ENCODE measurements at regions of chr12 and their contacts with region 1.

Region 1: GRCh38 chr12:93019975-93020630 is 91.0 kb upstream of the EEA1 start:
- DNase-seq: peak; percentile 92 to 96
- H3K4me3 ChIP-seq: no peak overlapping the region
- H3K4me3 Mint-ChIP-seq: peak overlapping the region; percentile 13
- H3K27ac Mint-ChIP-seq: peak overlapping the region; percentile 89
- H3K4me1 ChIP-seq: peaks cover 89% of the 10 kb centered on the region
- H3K4me1 Mint-ChIP-seq: peaks cover 63% of the 10 kb centered on the region
- H3K27me3 ChIP-seq: no peaks in the 10 kb centered on the region
- H3K27me3 Mint-ChIP-seq: no peaks in the 10 kb centered on the region
- CTCF ChIP-seq: no peak

Region 2: GRCh38 chr12:92810370-92810769 is 209.7 kb before region 1 on chr12:
- CTCF ChIA-PET with region 1: no interaction called
- POLR2A ChIA-PET with region 1: no interaction called
- intact Hi-C with region 1: no loop called
- DNase-seq: no peak
- H3K4me3 ChIP-seq: no peak overlapping the region
- H3K4me3 Mint-ChIP-seq: no peak overlapping the region
- H3K27ac Mint-ChIP-seq: no peak overlapping the region
- H3K4me1 ChIP-seq: no peaks in the 10 kb centered on the region
- H3K4me1 Mint-ChIP-seq: no peaks in the 10 kb centered on the region
- H3K27me3 ChIP-seq: no peaks in the 10 kb centered on the region
- H3K27me3 Mint-ChIP-seq: no peaks in the 10 kb centered on the region
- CTCF ChIP-seq: no peak

Region 3: GRCh38 chr12:92995258-92995903 is 24.7 kb before region 1 on chr12:
- CTCF ChIA-PET with region 1: no interaction called
- POLR2A ChIA-PET with region 1: no interaction called
- intact Hi-C with region 1: no loop called
- DNase-seq: no peak
- H3K4me3 ChIP-seq: no peak overlapping the region
- H3K4me3 Mint-ChIP-seq: no peak overlapping the region
- H3K27ac Mint-ChIP-seq: no peak overlapping the region
- H3K4me1 ChIP-seq: peaks cover 19% of the 10 kb centered on the region
- H3K4me1 Mint-ChIP-seq: peaks cover 28% of the 10 kb centered on the region
- H3K27me3 ChIP-seq: no peaks in the 10 kb centered on the region
- H3K27me3 Mint-ChIP-seq: no peaks in the 10 kb centered on the region
- CTCF ChIP-seq: no peak

Region 4: GRCh38 chr12:93008044-93008778 is 11.9 kb before region 1 on chr12:
- CTCF ChIA-PET with region 1: interaction called, 8 read pairs
- POLR2A ChIA-PET with region 1: interaction called, 3 read pairs
- intact Hi-C with region 1: loop called (anchors 1 kb)
- DNase-seq: no peak
- H3K4me3 ChIP-seq: peak overlapping the region; percentile 41
- H3K4me3 Mint-ChIP-seq: peak overlapping the region; percentile 90
- H3K27ac Mint-ChIP-seq: peak overlapping the region; percentile 94
- H3K4me1 ChIP-seq: peaks cover 72% of the 10 kb centered on the region
- H3K4me1 Mint-ChIP-seq: peaks cover 43% of the 10 kb centered on the region
- H3K27me3 ChIP-seq: no peaks in the 10 kb centered on the region
- H3K27me3 Mint-ChIP-seq: no peaks in the 10 kb centered on the region
- CTCF ChIP-seq: no peak

Region 5: GRCh38 chr12:93080994-93081797 is 61.1 kb after region 1 on chr12:
- CTCF ChIA-PET with region 1: no interaction called
- POLR2A ChIA-PET with region 1: interaction called, 18 read pairs
- intact Hi-C with region 1: loop called (anchors 1 kb)
- DNase-seq: peak; percentile 74 to 86
- H3K4me3 ChIP-seq: no peak overlapping the region
- H3K4me3 Mint-ChIP-seq: peak overlapping the region; percentile 50
- H3K27ac Mint-ChIP-seq: peak overlapping the region; percentile 92
- H3K4me1 ChIP-seq: peaks cover 51% of the 10 kb centered on the region
- H3K4me1 Mint-ChIP-seq: peaks cover 36% of the 10 kb centered on the region
- H3K27me3 ChIP-seq: no peaks in the 10 kb centered on the region
- H3K27me3 Mint-ChIP-seq: no peaks in the 10 kb centered on the region
- CTCF ChIP-seq: no peak

Region 6: GRCh38 chr12:93093243-93093642 is 73.1 kb after region 1 on chr12:
- CTCF ChIA-PET with region 1: no interaction called
- POLR2A ChIA-PET with region 1: no interaction called
- intact Hi-C with region 1: no loop called
- DNase-seq: no peak
- H3K4me3 ChIP-seq: no peak overlapping the region
- H3K4me3 Mint-ChIP-seq: no peak overlapping the region
- H3K27ac Mint-ChIP-seq: no peak overlapping the region
- H3K4me1 ChIP-seq: peaks cover 66% of the 10 kb centered on the region
- H3K4me1 Mint-ChIP-seq: peaks cover 53% of the 10 kb centered on the region
- H3K27me3 ChIP-seq: no peaks in the 10 kb centered on the region
- H3K27me3 Mint-ChIP-seq: no peaks in the 10 kb centered on the region
- CTCF ChIP-seq: no peak

Region 7: DNA sequence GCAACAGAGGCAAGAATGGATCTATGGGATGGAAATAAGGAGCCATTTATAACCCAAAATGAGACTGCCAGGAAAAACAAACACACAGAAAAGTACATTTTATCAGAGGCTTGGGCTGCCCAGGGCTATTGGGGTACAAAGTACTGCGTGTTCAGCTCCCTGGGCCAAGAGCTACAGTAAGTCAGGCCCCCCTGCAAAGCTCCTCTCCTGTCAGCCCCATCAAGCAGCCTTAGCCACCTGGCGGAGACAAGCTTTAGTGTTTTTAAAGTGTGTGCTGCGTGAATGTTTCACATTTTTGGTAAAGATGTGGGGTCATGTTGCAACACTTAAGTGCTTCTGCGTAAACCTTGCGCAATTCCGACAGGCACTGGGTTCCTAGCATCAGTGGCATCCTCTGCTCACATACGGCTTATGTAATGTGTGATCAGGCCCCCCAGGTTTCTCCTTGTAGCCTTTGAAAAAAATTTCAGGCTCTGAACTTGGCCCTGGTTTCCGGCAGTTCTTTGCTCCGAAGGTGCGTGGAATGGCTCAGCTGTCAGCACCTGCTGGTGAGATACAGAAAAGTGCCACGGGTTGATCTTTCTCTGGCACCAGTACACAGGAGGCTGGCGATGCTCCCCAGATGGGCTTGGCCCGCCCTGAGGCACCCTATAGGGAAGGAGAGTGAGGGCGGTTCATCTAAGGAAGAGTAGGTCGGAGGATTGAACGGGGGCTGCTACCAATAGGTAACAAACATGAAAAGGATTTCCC is 107.7 kb after region 1 on chr12:
- CTCF ChIA-PET with region 1: interaction called, 7 read pairs
- POLR2A ChIA-PET with region 1: interaction called, 10 read pairs
- intact Hi-C with region 1: loop called (anchors 1 kb)
- DNase-seq: peak; percentile 89 to 93
- H3K4me3 ChIP-seq: no peak overlapping the region
- H3K4me3 Mint-ChIP-seq: peak overlapping the region; percentile 37
- H3K27ac Mint-ChIP-seq: peak overlapping the region; percentile 94
- H3K4me1 ChIP-seq: peaks cover 36% of the 10 kb centered on the region
- H3K4me1 Mint-ChIP-seq: peaks cover 43% of the 10 kb centered on the region
- H3K27me3 ChIP-seq: no peaks in the 10 kb centered on the region
- H3K27me3 Mint-ChIP-seq: no peaks in the 10 kb centered on the region
- CTCF ChIP-seq: peak; percentile 57 to 65

Region 8: DNA sequence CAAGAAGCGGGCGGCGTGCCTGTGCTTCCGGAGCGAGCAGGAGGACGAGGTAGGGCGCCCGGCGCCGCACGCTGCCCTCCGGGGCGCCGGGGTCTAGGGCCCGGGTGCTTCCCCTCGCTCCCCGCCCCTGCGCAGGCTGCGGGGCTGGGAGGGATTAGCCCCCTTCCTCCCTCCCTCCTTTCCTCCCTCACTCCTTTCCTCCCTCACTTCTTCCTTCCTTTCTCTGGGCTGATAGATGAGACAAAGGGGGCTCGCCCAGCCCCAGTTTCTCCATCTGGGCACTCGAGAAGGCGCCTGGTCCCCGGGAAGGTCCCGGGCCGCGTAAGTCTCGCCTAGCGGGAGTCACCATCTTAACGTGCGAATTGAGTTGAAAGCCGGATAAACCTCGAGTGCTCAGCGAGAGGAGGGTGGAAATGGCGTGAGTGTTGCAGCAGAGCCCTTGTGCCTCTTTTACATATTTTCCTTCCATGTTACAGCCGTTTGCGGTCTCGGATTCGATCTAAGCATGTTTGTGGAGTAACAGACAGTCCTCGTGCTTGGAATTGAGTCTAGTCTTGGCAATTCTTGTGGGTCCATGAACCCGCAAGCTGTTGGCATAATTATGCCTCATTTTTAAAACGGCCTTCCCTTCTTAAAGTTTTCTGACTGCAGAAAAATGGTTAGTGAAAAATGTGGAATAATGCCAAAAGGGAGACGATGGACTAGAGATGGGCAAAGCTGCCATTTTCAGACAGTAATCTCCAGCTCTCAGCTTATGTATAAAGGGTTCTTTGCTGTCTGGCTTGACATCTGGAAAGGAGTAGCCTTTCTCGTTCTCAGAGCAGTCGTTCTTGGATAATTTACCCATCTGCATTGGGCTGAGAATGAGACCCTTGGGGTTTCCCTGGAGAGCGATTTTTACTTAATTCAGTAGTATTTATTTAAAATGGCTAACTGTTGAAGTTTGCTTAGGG is 358.5 kb after region 1 on chr12:
- CTCF ChIA-PET with region 1: interaction called, 4 read pairs
- POLR2A ChIA-PET with region 1: interaction called, 3 read pairs
- intact Hi-C with region 1: loop called (anchors 1 kb)
- DNase-seq: peak in 1 of 2 experiments; percentile 26
- H3K4me3 ChIP-seq: peak overlapping the region; percentile 83
- H3K4me3 Mint-ChIP-seq: peak overlapping the region; percentile 80
- H3K27ac Mint-ChIP-seq: peak overlapping the region; percentile 90
- H3K4me1 ChIP-seq: peaks cover 36% of the 10 kb centered on the region
- H3K4me1 Mint-ChIP-seq: peaks cover 25% of the 10 kb centered on the region
- H3K27me3 ChIP-seq: no peaks in the 10 kb centered on the region
- H3K27me3 Mint-ChIP-seq: no peaks in the 10 kb centered on the region
- CTCF ChIP-seq: no peak